A673 (cell line): ENCODE measurements at regions of chr17 and their contacts with region 1.

Region 1: GRCh38 chr17:7544911-7545310 is 3.9 kb upstream of the TNFSF12 start:
- DNase-seq: no peak
- H3K4me3 ChIP-seq: no peak overlapping the region
- H3K27ac ChIP-seq: no peak overlapping the region
- H3K4me1 ChIP-seq: no peaks in the 10 kb centered on the region
- H3K27me3 ChIP-seq: no peaks in the 10 kb centered on the region
- CTCF ChIP-seq: no peak

Region 2: DNA sequence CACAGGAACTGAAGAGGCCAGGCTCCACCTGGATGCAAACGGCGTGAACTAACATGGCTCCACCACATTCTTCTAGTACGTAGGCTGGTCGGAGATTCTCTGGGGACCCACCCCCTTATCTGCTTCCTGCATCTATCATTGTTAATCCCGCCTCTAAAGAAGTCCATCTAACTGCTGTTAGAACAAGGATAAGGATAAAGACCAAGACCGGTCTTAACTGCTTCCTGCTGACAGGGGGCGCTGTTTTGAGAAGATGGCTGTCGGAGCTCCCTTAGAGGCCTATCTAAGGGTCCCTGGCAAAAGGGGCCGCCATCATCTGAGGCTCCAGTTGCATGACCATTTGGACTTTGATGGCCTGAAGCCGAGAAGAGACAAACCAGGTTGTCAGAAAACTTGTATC is 21.9 kb before region 1 on chr17:
- CTCF ChIA-PET with region 1: no interaction called
- POLR2A ChIA-PET with region 1: interaction called, 14 read pairs
- intact Hi-C with region 1: no loop called
- DNase-seq: peak; percentile 68
- H3K4me3 ChIP-seq: no peak overlapping the region
- H3K27ac ChIP-seq: no peak overlapping the region
- H3K4me1 ChIP-seq: no peaks in the 10 kb centered on the region
- H3K27me3 ChIP-seq: no peaks in the 10 kb centered on the region
- CTCF ChIP-seq: peak; percentile 76